ENCODE measurements at regions of chr3 and their contacts with region 1.

Region 1: DNA sequence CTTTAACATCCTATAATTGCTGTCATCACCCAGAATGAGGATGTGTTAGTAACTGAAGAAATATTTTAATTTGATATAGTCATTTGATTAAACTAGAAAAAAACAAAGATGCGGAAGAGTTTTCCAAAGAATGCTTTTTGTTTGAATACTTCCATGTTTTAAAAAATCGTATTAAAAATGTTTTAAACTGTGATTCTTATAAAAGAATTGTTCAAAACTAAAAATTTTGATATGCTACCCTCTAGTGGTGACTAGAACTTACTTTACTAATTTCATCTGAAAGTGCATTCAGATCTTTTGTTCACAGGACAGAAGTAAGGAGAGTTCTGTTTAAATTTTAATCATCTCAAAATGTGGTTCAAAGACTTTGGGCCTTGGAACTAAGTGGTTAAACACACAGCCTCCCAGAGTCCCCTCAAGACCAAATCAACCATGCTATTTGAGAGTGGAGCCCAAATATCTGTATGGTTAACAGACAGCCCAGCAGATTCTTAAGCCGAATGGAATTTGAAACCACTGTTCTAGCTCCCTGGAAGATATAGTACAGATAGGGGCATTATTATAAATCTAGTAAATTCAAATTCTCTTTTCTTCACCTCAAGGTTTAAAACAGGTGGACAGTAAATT is 45.3 kb upstream of the SYNPR start:
- DNase-seq: no peak
- H3K4me3 ChIP-seq: no peak overlapping the region
- H3K27me3 ChIP-seq: no peaks in the 10 kb centered on the region
- CTCF ChIP-seq: peak; percentile 26; the same call in 1 of the 2 replicates

Region 2: GRCh38 chr3:62622553-62623193 is 610.2 kb before region 1 on chr3:
- CTCF ChIA-PET with region 1: interaction called, 13 read pairs
- POLR2A ChIA-PET with region 1: no interaction called
- DNase-seq: no peak
- H3K4me3 ChIP-seq: no peak overlapping the region
- H3K27me3 ChIP-seq: peaks cover 2% of the 10 kb centered on the region; the same call in 1 of the 2 replicates
- CTCF ChIP-seq: peak; percentile 65

Region 3: DNA sequence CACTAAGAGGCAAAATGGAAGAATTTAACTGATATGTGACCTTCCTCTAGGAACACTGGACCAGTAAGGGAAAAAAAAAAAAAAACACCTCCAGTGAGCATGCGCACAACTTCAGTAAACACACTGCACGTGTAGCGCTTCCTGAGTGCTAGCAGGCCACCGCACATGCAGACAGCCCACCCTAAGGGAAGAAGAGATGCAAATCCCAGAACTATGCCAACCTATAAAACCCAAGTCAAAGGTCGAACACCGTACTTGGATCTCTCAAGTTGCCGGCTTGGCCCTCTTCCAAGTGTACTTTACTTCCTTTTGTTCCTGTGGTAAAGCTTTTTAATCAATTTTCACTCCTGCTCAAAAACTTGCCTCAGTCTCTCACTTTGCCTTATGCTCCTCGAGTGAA is 293.1 kb before region 1 on chr3:
- CTCF ChIA-PET with region 1: no interaction called
- POLR2A ChIA-PET with region 1: no interaction called
- DNase-seq: no peak
- H3K4me3 ChIP-seq: no peak overlapping the region
- H3K27me3 ChIP-seq: no peaks in the 10 kb centered on the region
- CTCF ChIP-seq: no peak

Region 4: DNA sequence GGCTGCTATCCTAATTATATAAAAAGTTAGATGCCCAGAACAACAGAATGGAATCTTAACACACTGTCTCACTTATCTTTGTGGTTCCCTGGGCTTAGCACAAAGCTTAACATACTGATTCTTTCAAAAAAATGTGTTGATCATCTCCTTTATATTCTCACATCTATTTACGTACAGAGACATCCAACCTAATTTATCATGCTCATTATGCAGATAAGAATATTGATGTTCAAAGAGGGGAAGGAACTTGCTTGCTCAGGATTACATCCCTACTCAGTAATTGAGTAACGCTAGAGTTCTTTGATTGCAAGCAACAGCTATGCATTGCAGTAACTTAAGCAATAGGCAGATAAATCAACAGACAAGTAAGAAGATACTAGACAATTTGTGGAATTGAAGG is 129.0 kb before region 1 on chr3:
- CTCF ChIA-PET with region 1: no interaction called
- POLR2A ChIA-PET with region 1: no interaction called
- DNase-seq: no peak
- H3K4me3 ChIP-seq: no peak overlapping the region
- H3K27me3 ChIP-seq: no peaks in the 10 kb centered on the region
- CTCF ChIP-seq: no peak

Region 5: GRCh38 chr3:63244486-63244885 is 11.6 kb after region 1 on chr3:
- CTCF ChIA-PET with region 1: interaction called, 13 read pairs
- POLR2A ChIA-PET with region 1: no interaction called
- DNase-seq: no peak
- H3K4me3 ChIP-seq: no peak overlapping the region
- H3K27me3 ChIP-seq: no peaks in the 10 kb centered on the region
- CTCF ChIP-seq: no peak

Region 6: GRCh38 chr3:63264716-63265115 is 31.9 kb after region 1 on chr3:
- CTCF ChIA-PET with region 1: no interaction called
- POLR2A ChIA-PET with region 1: no interaction called
- DNase-seq: no peak
- H3K4me3 ChIP-seq: no peak overlapping the region
- H3K27me3 ChIP-seq: no peaks in the 10 kb centered on the region
- CTCF ChIP-seq: no peak